CD4-positive, alpha-beta memory T cell (primary cell): ENCODE measurements at regions of chr12 and their contacts with region 1.

Region 1: GRCh38 chr12:56461235-56462159 is 6.9 kb upstream of the SPRYD4 start:
- DNase-seq: no peak
- H3K4me3 ChIP-seq: no peak overlapping the region
- H3K4me3 Mint-ChIP-seq: no peak overlapping the region
- H3K27ac ChIP-seq: no peak overlapping the region
- H3K27ac Mint-ChIP-seq: no peak overlapping the region
- H3K4me1 ChIP-seq: peaks cover 8% of the 10 kb centered on the region
- H3K4me1 Mint-ChIP-seq: peaks cover 2 to 5% (median 5%) of the 10 kb centered on the region in 4 donors
- H3K27me3 ChIP-seq: no peaks in the 10 kb centered on the region
- H3K27me3 Mint-ChIP-seq: no peaks in the 10 kb centered on the region

Region 2: DNA sequence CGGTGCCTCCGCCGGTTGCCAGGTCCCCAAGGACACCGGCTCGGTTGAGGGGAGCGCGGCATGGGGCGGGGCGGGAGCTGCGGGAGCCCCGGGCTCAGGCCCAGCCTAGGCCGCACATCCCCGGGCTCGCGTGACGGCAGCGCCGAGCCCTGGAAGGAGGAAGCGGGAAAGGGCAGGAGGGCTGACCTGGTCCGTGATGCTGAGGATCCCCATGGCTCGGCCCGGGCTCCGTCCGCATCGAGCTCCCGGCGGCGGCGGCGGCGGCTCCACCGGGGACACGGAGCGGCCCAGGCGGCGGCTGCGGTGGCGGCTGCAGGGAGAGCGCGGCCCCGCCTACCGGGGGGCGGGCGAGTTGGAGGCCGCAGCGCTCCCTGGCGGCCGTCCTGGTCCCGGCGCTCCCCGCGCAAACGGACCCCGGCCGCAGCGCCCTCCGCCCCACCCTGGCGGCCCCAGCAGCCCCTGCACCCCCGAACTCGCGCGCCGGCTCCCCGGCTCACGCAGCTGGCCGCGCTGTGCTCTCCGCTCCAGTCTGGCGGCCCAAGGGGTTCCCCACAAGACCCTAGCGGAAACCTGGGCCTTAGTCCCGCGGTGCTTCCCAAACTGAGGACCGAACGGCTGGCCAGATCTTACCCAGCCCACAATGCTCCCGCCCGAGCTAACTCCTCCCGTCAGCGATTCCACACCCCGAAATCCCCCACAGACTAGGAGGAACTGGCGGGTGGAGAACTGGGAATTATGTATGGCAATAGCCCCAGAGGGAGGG is 203.3 kb before region 1 on chr12 and contains the start of gene ANKRD52:
- CTCF ChIA-PET with region 1: interaction called, 18 read pairs
- POLR2A ChIA-PET with region 1: interaction called, 5 read pairs
- intact Hi-C with region 1: loop called (anchors 1 kb)
- DNase-seq: peak; percentile 76 to 87 (median 82)
- H3K4me3 ChIP-seq: peak within 1 kb of the TSS; percentile 85 to 95
- H3K4me3 Mint-ChIP-seq: peak within 1 kb of the TSS; percentile 89 to 97 (median 92)
- H3K27ac ChIP-seq: peak within 1 kb of the TSS; percentile 81
- H3K27ac Mint-ChIP-seq: peak within 1 kb of the TSS; percentile 82 to 95 (median 91)
- H3K4me1 ChIP-seq: peaks cover 21% of the 10 kb centered on the region
- H3K4me1 Mint-ChIP-seq: peaks cover 13 to 31% (median 19%) of the 10 kb centered on the region in 4 donors
- H3K27me3 ChIP-seq: no peaks in the 10 kb centered on the region
- H3K27me3 Mint-ChIP-seq: no peaks in the 10 kb centered on the region
- total RNA-seq, gene ANKRD52: 44.1 to 44.5 TPM

Region 3: GRCh38 chr12:56307221-56307965 is 154.1 kb before region 1 on chr12:
- CTCF ChIA-PET with region 1: interaction called, 18 read pairs
- POLR2A ChIA-PET with region 1: no interaction called
- intact Hi-C with region 1: no loop called
- DNase-seq: no peak
- H3K4me3 ChIP-seq: no peak overlapping the region
- H3K4me3 Mint-ChIP-seq: no peak overlapping the region
- H3K27ac ChIP-seq: no peak overlapping the region
- H3K27ac Mint-ChIP-seq: no peak overlapping the region
- H3K4me1 ChIP-seq: no peaks in the 10 kb centered on the region
- H3K4me1 Mint-ChIP-seq: peaks cover under 1 to 2% (median under 1%) of the 10 kb centered on the region in 4 donors
- H3K27me3 ChIP-seq: no peaks in the 10 kb centered on the region
- H3K27me3 Mint-ChIP-seq: no peaks in the 10 kb centered on the region

Region 4: GRCh38 chr12:56333679-56334489 is 127.6 kb before region 1 on chr12 and contains the start of gene PAN2:
- CTCF ChIA-PET with region 1: interaction called, 24 read pairs
- POLR2A ChIA-PET with region 1: interaction called, 12 read pairs
- intact Hi-C with region 1: loop called (anchors 1 kb)
- DNase-seq: peak; percentile 92 to 96 (median 93)
- H3K4me3 ChIP-seq: peak within 1 kb of the TSS; percentile 69 to 83
- H3K4me3 Mint-ChIP-seq: peak within 1 kb of the TSS; percentile 89 to 99 (median 94)
- H3K27ac ChIP-seq: peak within 1 kb of the TSS; percentile 99
- H3K27ac Mint-ChIP-seq: peak within 1 kb of the TSS; percentile 99 to 100 (median 100)
- H3K4me1 ChIP-seq: peaks cover 37% of the 10 kb centered on the region
- H3K4me1 Mint-ChIP-seq: peaks cover 23 to 50% (median 30%) of the 10 kb centered on the region in 4 donors
- H3K27me3 ChIP-seq: no peaks in the 10 kb centered on the region
- H3K27me3 Mint-ChIP-seq: peaks cover 0 to 2% of the 10 kb centered on the region in 2 donors
- total RNA-seq, gene PAN2: 193 to 203 TPM

Region 5: DNA sequence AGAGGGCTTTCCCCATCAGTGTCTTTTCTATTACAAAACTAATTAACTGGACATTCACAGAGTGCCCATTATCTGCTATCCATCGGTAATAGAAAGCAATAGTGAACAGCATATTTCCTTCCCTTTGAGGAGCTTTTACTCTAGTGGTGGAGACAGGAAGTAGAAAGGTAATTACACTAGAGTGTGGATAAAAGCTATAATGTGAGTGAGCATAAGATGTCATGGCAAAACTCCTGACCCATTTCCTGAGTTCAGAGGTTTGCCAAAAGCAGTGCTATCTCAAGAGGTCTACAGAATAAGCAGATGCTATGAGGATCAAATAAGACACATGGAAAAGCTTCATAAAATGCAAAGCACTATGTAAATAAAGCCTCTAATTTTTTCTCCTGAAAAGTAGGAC is 36.3 kb before region 1 on chr12:
- CTCF ChIA-PET with region 1: interaction called, 11 read pairs
- POLR2A ChIA-PET with region 1: no interaction called
- intact Hi-C with region 1: no loop called
- DNase-seq: peak in 1 of 5 donors; percentile 6
- H3K4me3 ChIP-seq: no peak overlapping the region
- H3K4me3 Mint-ChIP-seq: peak overlapping the region in 2 of 8 donors; percentile 34 to 36
- H3K27ac ChIP-seq: no peak overlapping the region
- H3K27ac Mint-ChIP-seq: peak overlapping the region; percentile 0 to 86 (median 57)
- H3K4me1 ChIP-seq: peaks cover 9% of the 10 kb centered on the region
- H3K4me1 Mint-ChIP-seq: peaks cover 6 to 10% (median 7%) of the 10 kb centered on the region in 4 donors
- H3K27me3 ChIP-seq: no peaks in the 10 kb centered on the region
- H3K27me3 Mint-ChIP-seq: no peaks in the 10 kb centered on the region